ENCODE measurements at regions of chr1 and their contacts with region 1.

Region 1: GRCh38 chr1:111222308-111223125 is 5.0 kb upstream of the CHI3L2 start:
- DNase-seq: peak; percentile 65 to 80 (median 72)
- H3K4me3 ChIP-seq: peak overlapping the region; percentile 28
- H3K4me3 Mint-ChIP-seq: peak overlapping the region; percentile 67 to 92 (median 79)
- H3K27ac ChIP-seq: peak overlapping the region; percentile 7
- H3K27ac Mint-ChIP-seq: peak overlapping the region; percentile 86 to 99 (median 97)
- H3K4me1 ChIP-seq: peaks cover 96% of the 10 kb centered on the region
- H3K4me1 Mint-ChIP-seq: peaks cover 92 to 99% (median 96%) of the 10 kb centered on the region in 3 donors
- H3K27me3 ChIP-seq: no peaks in the 10 kb centered on the region
- H3K27me3 Mint-ChIP-seq: no peaks in the 10 kb centered on the region

Region 2: GRCh38 chr1:110976089-110976488 is 246.4 kb before region 1 on chr1:
- CTCF ChIA-PET with region 1: no interaction called
- POLR2A ChIA-PET with region 1: no interaction called
- DNase-seq: no peak
- H3K4me3 ChIP-seq: no peak overlapping the region
- H3K4me3 Mint-ChIP-seq: no peak overlapping the region
- H3K27ac ChIP-seq: no peak overlapping the region
- H3K27ac Mint-ChIP-seq: peak overlapping the region in 1 of 8 donors; percentile 58
- H3K4me1 ChIP-seq: no peaks in the 10 kb centered on the region
- H3K4me1 Mint-ChIP-seq: peaks cover 3 to 5% (median 4%) of the 10 kb centered on the region in 3 donors
- H3K27me3 ChIP-seq: peaks cover 4% of the 10 kb centered on the region
- H3K27me3 Mint-ChIP-seq: peaks cover 17 to 61% of the 10 kb centered on the region in 2 donors

Region 3: DNA sequence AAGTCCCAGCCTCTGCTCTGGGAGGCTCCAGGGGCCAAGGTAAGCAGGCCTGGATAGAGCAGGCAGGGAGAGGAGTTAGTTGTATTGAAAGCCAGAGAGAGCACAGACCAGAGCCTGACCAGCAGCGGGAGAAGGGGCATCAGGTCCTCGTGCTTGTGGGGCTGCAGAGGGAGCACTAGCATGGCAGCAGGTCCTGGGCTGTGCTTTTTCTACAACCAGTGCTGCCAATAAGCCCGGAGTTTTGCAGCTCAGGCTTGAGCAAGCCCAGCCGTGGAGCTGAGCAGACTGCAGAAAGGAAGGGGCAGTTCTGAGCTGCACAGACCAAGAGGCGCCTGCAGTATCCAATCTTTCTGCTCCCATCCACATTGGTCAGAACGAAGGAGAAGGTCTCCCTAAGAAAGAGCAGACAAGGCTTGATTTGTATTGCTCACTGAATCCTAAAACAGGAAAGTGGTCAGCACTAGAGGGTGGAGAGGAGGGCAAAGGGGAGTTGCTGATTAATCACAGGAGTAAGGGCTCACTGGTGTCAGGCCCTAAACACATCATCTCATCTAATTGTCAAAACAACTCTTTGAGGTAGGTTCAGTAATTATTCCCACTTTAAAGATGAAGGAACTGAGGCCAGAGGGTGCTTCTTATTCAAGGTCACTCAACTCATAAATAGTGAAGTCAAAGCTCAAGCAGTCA is 24.8 kb before region 1 on chr1:
- CTCF ChIA-PET with region 1: interaction called, 252 read pairs
- POLR2A ChIA-PET with region 1: interaction called, 259 read pairs
- DNase-seq: peak; percentile 43 to 78 (median 69)
- H3K4me3 ChIP-seq: peak overlapping the region; percentile 96
- H3K4me3 Mint-ChIP-seq: peak overlapping the region; percentile 97 to 100 (median 99)
- H3K27ac ChIP-seq: peak overlapping the region; percentile 62
- H3K27ac Mint-ChIP-seq: peak overlapping the region; percentile 93 to 100 (median 96)
- H3K4me1 ChIP-seq: peaks cover 69% of the 10 kb centered on the region
- H3K4me1 Mint-ChIP-seq: peaks cover 76 to 78% (median 78%) of the 10 kb centered on the region in 3 donors
- H3K27me3 ChIP-seq: no peaks in the 10 kb centered on the region
- H3K27me3 Mint-ChIP-seq: no peaks in the 10 kb centered on the region

Region 4: GRCh38 chr1:111203681-111204200 is 18.8 kb before region 1 on chr1:
- CTCF ChIA-PET with region 1: interaction called, 252 read pairs
- POLR2A ChIA-PET with region 1: interaction called, 259 read pairs
- DNase-seq: peak; percentile 77 to 93 (median 86)
- H3K4me3 ChIP-seq: peak overlapping the region; percentile 96
- H3K4me3 Mint-ChIP-seq: peak overlapping the region; percentile 97 to 100 (median 99)
- H3K27ac ChIP-seq: peak overlapping the region; percentile 35
- H3K27ac Mint-ChIP-seq: peak overlapping the region; percentile 92 to 100 (median 96)
- H3K4me1 ChIP-seq: peaks cover 49% of the 10 kb centered on the region
- H3K4me1 Mint-ChIP-seq: peaks cover 59 to 73% (median 69%) of the 10 kb centered on the region in 3 donors
- H3K27me3 ChIP-seq: no peaks in the 10 kb centered on the region
- H3K27me3 Mint-ChIP-seq: peaks cover 0 to 3% of the 10 kb centered on the region in 2 donors

Region 5: DNA sequence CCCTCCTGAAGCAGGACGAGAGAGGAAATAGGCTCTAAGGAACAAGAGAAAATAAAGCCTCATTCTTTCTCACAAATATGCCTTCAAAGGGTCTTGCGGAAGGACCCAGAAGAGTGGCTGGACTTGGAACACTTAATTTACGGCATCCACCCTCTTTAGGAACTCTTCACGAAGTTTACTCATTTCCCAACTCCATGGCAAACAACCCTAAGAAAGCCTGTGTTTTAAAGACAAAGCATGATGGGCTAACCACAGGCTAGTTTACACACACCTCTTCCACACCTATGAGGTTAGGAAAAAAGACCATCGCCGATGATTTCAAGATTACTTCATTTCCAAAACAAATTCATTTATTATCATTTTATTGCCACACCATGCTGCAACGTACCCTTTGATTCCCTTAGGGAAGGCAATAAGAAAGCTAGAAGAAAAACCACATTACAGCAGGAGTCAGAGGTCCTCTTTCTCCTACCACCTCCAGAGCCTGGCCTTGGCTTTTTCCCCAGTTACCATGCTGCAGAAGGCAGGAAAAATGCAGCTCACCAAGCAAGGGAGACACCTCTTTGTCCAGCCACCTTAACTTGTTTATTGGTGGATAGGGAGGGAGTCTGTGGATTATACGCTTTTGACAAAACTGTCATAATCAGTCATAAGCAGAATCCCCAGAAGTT is 34.6 kb after region 1 on chr1:
- CTCF ChIA-PET with region 1: no interaction called
- POLR2A ChIA-PET with region 1: no interaction called
- DNase-seq: no peak
- H3K4me3 ChIP-seq: no peak overlapping the region
- H3K4me3 Mint-ChIP-seq: no peak overlapping the region
- H3K27ac ChIP-seq: no peak overlapping the region
- H3K27ac Mint-ChIP-seq: no peak overlapping the region
- H3K4me1 ChIP-seq: peaks cover 3% of the 10 kb centered on the region
- H3K4me1 Mint-ChIP-seq: peaks cover under 1 to 2% (median 1%) of the 10 kb centered on the region in 3 donors
- H3K27me3 ChIP-seq: no peaks in the 10 kb centered on the region
- H3K27me3 Mint-ChIP-seq: peaks cover 0 to 3% of the 10 kb centered on the region in 2 donors

Region 6: DNA sequence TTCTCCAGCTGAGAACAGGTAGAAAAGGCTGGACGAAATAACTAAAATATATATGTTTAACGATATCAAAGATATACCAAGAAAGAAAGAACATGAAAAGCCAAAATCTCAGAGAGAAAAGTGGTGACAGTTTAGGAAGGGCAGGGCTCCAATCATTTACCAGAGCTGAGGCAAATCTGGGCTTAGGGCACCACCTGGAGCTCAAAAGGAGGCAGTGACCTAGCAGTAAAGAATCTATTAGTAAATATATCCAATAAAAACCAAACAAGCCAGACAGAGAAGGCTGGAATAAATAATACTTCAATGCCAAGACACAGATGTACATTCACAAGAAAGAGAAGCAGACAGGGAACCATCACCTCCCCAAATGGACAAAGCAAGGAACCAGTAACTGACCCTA is 111.7 kb after region 1 on chr1:
- CTCF ChIA-PET with region 1: interaction called, 13 read pairs
- POLR2A ChIA-PET with region 1: no interaction called
- DNase-seq: peak; percentile 6 to 73 (median 49)
- H3K4me3 ChIP-seq: no peak overlapping the region
- H3K4me3 Mint-ChIP-seq: peak overlapping the region in 1 of 7 donors; percentile 4
- H3K27ac ChIP-seq: no peak overlapping the region
- H3K27ac Mint-ChIP-seq: peak overlapping the region in 6 of 8 donors; percentile 2 to 80 (median 74)
- H3K4me1 ChIP-seq: peaks cover 4% of the 10 kb centered on the region
- H3K4me1 Mint-ChIP-seq: peaks cover 4 to 14% (median 5%) of the 10 kb centered on the region in 3 donors
- H3K27me3 ChIP-seq: no peaks in the 10 kb centered on the region
- H3K27me3 Mint-ChIP-seq: peaks cover 2 to 3% of the 10 kb centered on the region in 2 donors

Region 7: DNA sequence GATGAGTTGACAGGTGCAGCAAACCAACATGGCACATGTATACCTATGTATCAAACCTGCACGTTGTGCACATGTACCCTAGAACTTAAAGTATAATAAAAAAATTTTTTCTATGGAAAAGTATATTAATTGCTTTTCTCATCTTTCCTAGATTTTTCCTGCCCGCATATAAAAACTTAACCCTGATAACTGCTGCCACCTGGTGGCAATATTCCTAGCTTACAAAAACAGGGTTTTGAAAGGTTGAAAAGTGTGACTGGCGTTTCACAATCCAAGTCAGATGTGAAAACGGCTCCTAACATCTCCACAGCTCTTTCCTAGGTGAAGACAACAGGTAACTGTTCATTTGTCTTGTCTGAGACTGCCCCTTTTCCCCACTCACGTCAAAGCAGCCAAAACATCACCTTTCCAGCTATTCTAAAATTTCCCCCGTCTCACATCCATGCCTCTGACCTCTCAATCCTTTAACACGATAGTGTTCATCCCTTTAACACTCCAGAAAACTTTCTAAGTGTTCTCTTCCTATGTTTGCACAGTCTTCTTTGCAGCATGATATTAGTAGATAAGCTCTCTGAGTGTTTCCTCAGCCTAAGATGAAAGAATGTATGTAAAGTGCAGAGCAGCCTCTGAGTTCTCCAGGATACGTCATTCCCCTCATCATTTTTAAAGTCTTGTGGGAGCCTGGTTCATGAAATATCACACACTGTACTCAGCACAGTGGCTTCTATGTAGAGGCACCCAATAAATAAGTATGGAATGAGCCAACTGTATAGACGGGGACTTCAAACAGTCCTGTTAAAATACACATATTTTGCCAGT is 177.5 kb after region 1 on chr1:
- CTCF ChIA-PET with region 1: interaction called, 21 read pairs
- POLR2A ChIA-PET with region 1: no interaction called
- DNase-seq: peak in 4 of 5 donors; percentile 15 to 37 (median 26)
- H3K4me3 ChIP-seq: no peak overlapping the region
- H3K4me3 Mint-ChIP-seq: no peak overlapping the region
- H3K27ac ChIP-seq: no peak overlapping the region
- H3K27ac Mint-ChIP-seq: no peak overlapping the region
- H3K4me1 ChIP-seq: no peaks in the 10 kb centered on the region
- H3K4me1 Mint-ChIP-seq: peaks cover 9 to 26% (median 10%) of the 10 kb centered on the region in 3 donors
- H3K27me3 ChIP-seq: no peaks in the 10 kb centered on the region
- H3K27me3 Mint-ChIP-seq: peaks cover 2 to 10% of the 10 kb centered on the region in 2 donors

Region 8: DNA sequence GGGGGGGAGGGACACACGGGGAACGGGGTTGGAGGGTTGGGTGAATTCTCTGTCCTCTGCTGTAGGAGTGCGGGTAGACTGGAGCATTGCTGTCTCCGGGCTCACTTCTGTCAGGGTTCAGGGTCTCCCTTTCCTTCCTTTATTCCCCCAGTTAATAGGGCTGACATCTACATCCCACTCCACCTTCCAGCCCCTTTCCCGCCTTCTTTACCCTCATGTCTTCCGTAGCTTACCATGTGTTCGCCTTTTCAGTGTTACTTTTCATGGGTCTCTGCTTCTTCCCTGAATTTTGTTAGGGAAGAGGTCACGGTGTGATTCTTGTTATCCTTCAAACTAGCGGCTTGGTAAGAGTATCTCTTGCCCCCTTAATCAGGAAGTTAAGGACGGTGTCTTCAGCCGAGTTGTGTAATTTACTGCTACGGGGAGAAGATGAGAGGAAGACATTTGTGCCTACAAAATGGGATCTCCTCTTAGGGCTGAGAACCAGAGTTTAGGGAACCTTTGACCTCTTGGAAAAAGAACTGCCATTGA is 398.0 kb after region 1 on chr1:
- CTCF ChIA-PET with region 1: no interaction called
- POLR2A ChIA-PET with region 1: no interaction called
- DNase-seq: no peak
- H3K4me3 ChIP-seq: peak overlapping the region; percentile 80
- H3K4me3 Mint-ChIP-seq: peak overlapping the region; percentile 95 to 100 (median 98)
- H3K27ac ChIP-seq: peak overlapping the region; percentile 73
- H3K27ac Mint-ChIP-seq: peak overlapping the region; percentile 86 to 99 (median 96)
- H3K4me1 ChIP-seq: peaks cover 80% of the 10 kb centered on the region
- H3K4me1 Mint-ChIP-seq: peaks cover 74 to 85% (median 77%) of the 10 kb centered on the region in 3 donors
- H3K27me3 ChIP-seq: no peaks in the 10 kb centered on the region
- H3K27me3 Mint-ChIP-seq: no peaks in the 10 kb centered on the region